ENCODE measurements at regions of chr19 and their contacts with region 1.

Region 1: GRCh38 chr19:14383661-14384555 is 2.7 kb downstream of the ADGRE5 start:
- DNase-seq: peak; percentile 58
- H3K4me3 Mint-ChIP-seq: peak overlapping the region; percentile 95
- H3K27ac Mint-ChIP-seq: peak overlapping the region; percentile 98
- H3K4me1 Mint-ChIP-seq: peaks cover 40% of the 10 kb centered on the region
- H3K27me3 Mint-ChIP-seq: no peaks in the 10 kb centered on the region

Region 2: DNA sequence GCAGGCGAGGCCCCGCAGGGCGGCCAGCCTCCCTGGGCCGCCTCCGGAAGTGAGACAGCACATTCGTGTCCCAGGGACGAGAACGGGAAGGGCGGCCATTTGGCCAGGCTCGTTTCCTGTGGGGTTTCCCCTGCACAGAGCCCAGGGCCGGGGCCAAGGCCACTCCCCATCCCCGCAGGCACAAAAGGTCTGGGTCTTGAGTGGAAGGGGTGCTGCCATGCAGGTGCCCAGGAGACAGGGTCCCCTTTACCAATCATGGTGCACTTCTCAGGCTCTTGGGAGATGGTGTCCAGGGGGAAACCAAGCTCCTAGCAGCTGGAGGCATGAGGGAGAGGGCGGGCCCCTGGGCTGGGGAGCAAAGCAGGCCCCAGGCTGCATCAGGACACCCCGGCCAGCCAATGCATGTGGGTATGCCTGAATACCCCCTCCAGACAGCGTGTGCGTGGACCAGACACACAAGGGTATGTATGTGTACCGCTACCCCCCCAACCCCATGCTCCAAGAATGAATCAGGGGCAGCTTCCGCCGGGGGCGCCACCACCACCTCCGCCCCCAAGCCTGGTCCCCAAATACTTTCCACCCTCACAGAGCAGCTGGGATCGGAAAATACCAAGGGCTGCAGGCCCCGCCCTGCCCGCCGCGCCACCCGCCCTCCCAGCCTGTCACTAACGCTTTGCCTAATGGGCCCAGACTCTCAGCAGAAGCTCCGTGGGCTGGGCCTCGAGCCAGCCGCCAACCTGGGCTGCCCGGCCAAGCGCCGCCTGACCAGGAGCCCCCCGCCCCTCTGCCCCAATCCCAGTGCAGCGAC is 544.6 kb before region 1 on chr19:
- intact Hi-C with region 1: loop called (anchors 5 kb)
- DNase-seq: peak; percentile 79
- H3K4me3 Mint-ChIP-seq: peak overlapping the region; percentile 93
- H3K27ac Mint-ChIP-seq: peak overlapping the region; percentile 99
- H3K4me1 Mint-ChIP-seq: peaks cover 36% of the 10 kb centered on the region
- H3K27me3 Mint-ChIP-seq: no peaks in the 10 kb centered on the region

Region 3: GRCh38 chr19:14347999-14348889 is 35.7 kb before region 1 on chr19:
- intact Hi-C with region 1: loop called (anchors 1 kb)
- DNase-seq: peak; percentile 61
- H3K4me3 Mint-ChIP-seq: peak overlapping the region; percentile 58
- H3K27ac Mint-ChIP-seq: peak overlapping the region; percentile 47
- H3K4me1 Mint-ChIP-seq: peaks cover 18% of the 10 kb centered on the region
- H3K27me3 Mint-ChIP-seq: peaks cover 5% of the 10 kb centered on the region

Region 4: DNA sequence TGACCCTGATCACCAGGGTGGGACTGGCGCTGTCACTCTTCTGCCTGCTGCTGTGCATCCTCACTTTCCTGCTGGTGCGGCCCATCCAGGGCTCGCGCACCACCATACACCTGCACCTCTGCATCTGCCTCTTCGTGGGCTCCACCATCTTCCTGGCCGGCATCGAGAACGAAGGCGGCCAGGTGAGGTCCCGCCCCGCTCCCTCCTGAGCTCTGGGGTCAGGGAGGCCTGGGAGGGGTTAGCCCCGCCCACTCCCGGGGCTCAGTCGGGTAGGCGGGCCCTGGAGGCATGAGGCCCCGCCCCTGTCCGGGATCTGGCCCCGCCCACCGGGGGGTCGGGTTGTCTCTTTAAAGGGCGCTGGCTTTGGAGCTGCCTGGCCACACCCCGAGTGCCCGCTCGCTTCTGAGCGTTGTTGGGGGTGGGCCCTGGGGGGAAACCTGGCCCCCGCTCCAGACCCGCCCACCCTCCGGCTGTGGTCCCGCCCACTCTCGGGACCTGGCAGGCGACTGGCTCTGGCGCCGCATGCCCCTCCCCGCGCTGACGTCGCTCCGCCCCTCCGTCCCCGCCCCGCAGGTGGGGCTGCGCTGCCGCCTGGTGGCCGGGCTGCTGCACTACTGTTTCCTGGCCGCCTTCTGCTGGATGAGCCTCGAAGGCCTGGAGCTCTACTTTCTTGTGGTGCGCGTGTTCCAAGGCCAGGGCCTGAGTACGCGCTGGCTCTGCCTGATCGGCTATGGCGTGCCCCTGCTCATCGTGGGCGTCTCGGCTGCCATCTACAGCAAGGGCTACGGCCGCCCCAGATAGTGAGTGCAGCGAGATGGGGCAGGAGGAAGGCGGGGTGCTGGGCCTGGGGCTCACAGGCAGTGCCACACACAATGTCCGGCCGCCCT is 22.1 kb after region 1 on chr19:
- intact Hi-C with region 1: loop called (anchors 1 kb)
- DNase-seq: peak; percentile 85
- H3K4me3 Mint-ChIP-seq: no peak overlapping the region
- H3K27ac Mint-ChIP-seq: peak overlapping the region; percentile 65
- H3K4me1 Mint-ChIP-seq: no peaks in the 10 kb centered on the region
- H3K27me3 Mint-ChIP-seq: no peaks in the 10 kb centered on the region

Region 5: DNA sequence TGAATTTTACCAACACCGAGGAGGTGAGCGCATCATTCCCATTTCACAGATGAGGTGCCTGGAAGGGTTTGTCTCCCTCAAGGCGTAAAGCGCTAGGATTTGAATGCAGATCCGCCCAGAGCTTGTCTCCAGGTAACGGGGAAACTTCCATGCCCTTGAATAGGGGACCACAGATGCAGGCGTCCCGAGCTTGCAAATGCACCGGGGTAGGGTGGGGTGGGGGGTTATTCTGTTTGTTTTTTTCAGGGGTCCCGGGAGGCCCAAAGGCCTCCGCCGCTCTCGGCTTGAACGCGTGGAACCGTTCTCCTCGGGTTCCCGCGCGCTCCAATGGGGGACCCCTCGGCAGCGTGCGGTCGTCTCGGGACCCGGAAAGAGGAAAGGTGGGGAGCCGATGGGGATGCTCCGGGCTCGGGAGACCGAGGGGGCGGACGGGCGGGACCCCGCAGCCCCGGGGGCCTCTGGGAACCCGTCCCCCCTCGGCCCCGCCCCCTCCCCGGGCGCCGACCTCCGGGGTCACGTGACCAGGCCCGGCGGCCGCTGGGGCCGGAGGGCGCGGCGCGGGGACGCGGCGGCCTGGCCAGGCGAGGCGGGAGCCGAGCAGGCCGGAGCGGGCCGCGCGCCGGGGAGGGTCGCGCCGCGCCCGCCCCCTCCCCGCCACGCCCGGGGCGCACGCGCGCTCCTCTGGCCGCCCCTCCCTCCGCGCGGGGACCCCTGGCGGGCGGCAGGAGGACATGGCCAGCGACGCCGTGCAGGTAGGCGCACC is 49.1 kb after region 1 on chr19 and contains the start of gene PKN1:
- intact Hi-C with region 1: loop called (anchors 1 kb)
- DNase-seq: peak; percentile 47
- H3K4me3 Mint-ChIP-seq: peak within 1 kb of the TSS; percentile 89
- H3K27ac Mint-ChIP-seq: peak within 1 kb of the TSS; percentile 81
- H3K4me1 Mint-ChIP-seq: peaks cover 37% of the 10 kb centered on the region
- H3K27me3 Mint-ChIP-seq: peaks cover 12% of the 10 kb centered on the region
- total RNA-seq, gene PKN1: 151 and 180 TPM in 2 replicates

Measured in activated T-helper 1 cell treated with anti-CD3 and anti-CD28 coated beads, Interleukin-12 subunit alpha, Interleukin-12 subunit beta, Interleukin-2, Interleukin-4 antibody, amounts not matched to agents 30 ng/mL and 10 ng/mL and 1 ng/mL, durations not matched to agents 14 hours and 24 hours and 36 hours (primary cell).